ENCODE measurements at regions of chr10 and their contacts with region 1.

Region 1: DNA sequence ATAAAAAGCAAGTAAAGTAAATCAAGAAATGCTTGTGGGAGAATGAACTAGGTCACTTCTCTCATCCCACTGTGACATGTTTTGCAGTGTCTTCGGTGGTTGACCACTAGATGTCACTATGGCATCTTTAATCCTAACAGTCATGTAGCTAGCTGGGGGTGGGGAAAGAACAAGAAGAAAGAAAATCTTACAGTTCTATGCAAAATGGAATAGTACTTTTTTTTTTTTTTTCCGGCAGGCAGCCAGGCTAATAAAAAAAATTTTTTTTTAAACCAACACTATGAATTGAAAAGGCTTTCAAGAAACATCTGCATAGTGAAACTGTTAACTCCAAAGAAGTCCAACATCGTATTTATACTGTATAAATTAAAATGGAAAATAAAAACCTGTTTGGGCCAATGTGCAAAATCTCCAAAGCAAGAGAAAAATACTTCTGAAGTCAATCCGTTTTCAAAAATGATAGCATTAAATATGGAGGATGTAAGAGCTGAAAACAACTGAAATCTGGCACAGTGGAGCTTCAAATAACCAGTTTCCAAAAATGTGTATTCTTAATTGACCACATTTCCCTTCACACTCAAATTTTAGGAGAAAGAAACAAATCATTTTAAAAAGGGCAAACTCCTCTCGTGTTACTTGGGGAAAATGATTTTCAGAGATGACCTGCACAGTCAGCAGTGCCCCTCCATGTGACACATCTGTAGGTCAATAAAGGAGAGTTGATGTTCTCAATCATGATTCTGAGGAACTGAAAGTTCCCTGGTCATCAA is 38.5 kb downstream of the CDK1 start:
- DNase-seq: no peak
- ATAC-seq: peak; percentile 83 to 96 (median 90)
- H3K4me3 ChIP-seq: no peak overlapping the region
- H3K27ac ChIP-seq: peak overlapping the region; percentile 17
- H3K4me1 ChIP-seq: peaks cover 29% of the 10 kb centered on the region
- H3K27me3 ChIP-seq: no peaks in the 10 kb centered on the region
- CTCF ChIP-seq: peak; percentile 82

Region 2: GRCh38 chr10:60848126-60848525 is 31.3 kb after region 1 on chr10:
- intact Hi-C with region 1: loop called in 1 of 2 experiments (anchors 1 kb)
- DNase-seq: peak; percentile 25 to 70
- ATAC-seq: peak; percentile 75 to 84 (median 77)
- H3K4me3 ChIP-seq: peak overlapping the region; percentile 16
- H3K27ac ChIP-seq: peak overlapping the region; percentile 96
- H3K4me1 ChIP-seq: peaks cover 42% of the 10 kb centered on the region
- H3K27me3 ChIP-seq: no peaks in the 10 kb centered on the region
- CTCF ChIP-seq: peak; percentile 44

Region 3: DNA sequence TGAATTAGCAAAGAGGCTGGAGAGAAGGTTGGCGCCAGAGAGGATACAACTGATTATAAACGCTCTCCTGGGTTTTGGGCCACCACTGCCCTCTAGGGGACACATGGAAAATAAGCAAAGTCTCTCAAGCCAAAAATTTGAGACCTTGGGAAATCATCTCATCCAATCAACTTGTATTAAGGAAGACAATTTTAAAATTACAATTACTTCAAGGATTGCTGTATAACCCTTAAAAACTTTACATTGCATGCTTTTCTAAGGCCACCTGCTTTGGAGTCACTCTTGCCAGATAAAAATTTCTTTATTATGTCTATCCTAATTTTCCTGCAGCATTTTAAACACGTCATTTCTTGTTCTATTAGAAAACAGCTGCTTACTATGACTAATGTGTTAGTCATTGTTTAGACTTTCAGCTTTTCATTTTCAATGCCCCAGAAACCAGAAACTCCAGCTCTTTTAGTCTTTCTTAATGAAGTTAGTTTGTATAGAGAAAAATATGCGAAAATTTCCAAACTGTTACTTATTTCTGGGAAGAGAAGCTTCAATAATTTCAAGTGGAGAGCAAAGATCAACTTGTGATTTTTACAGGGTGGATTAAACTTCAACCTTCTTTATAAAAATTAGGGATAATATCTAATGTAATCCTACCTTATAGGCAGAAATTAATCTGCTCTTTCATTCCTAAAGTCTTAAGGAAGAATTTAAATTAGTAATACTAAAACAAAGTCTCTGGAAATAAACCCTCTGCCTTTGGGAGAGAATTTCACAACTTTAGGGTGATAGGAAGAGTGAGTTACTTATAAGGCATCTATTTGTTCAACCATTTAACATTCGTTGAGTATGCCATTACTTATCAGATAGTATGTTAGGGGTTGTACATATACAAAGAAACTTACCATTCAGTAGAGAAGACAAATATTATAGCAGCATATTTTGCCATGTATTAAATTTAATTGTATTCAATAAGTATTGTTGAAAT is 147.7 kb after region 1 on chr10:
- intact Hi-C with region 1: loop called (anchors 2 kb)
- DNase-seq: peak; percentile 59 to 71
- ATAC-seq: peak; percentile 87 to 97 (median 90)
- H3K4me3 ChIP-seq: no peak overlapping the region
- H3K27ac ChIP-seq: peak overlapping the region; percentile 31
- H3K4me1 ChIP-seq: peaks cover 21% of the 10 kb centered on the region
- H3K27me3 ChIP-seq: no peaks in the 10 kb centered on the region
- CTCF ChIP-seq: peak; percentile 85

Region 4: DNA sequence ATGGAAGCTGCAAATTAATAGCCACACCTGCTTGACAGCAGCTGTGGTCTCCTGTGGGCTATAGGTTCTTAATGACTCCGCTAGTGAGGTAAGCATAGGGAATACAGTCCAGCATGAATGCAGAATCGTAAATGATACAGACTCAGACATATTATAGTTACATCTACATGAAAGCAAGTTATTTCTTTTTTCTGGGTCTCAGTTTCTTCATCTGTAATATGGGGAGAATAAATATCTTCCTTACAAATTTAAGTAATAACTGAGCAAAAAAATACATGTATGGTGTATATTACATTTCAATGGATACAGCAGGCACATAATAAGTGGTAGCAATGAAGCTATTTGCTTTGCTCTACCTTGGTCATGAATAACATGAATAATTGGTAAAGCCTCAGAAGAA is 373.1 kb after region 1 on chr10:
- intact Hi-C with region 1: loop called in 1 of 2 experiments (anchors 5 kb)
- DNase-seq: no peak
- ATAC-seq: no peak
- H3K4me3 ChIP-seq: no peak overlapping the region
- H3K27ac ChIP-seq: no peak overlapping the region
- H3K4me1 ChIP-seq: no peaks in the 10 kb centered on the region
- H3K27me3 ChIP-seq: no peaks in the 10 kb centered on the region
- CTCF ChIP-seq: no peak

Region 5: GRCh38 chr10:61733358-61733940 is 916.6 kb after region 1 on chr10:
- intact Hi-C with region 1: loop called in 1 of 2 experiments (anchors 5 kb)
- DNase-seq: no peak
- ATAC-seq: no peak
- H3K4me3 ChIP-seq: no peak overlapping the region
- H3K27ac ChIP-seq: no peak overlapping the region
- H3K4me1 ChIP-seq: no peaks in the 10 kb centered on the region
- H3K27me3 ChIP-seq: no peaks in the 10 kb centered on the region
- CTCF ChIP-seq: peak; percentile 59

Measured in psoas muscle (tissue), 8 donors.